HEK293 (cell line): ENCODE measurements at regions of chrX and their contacts with region 1.

Region 1: DNA sequence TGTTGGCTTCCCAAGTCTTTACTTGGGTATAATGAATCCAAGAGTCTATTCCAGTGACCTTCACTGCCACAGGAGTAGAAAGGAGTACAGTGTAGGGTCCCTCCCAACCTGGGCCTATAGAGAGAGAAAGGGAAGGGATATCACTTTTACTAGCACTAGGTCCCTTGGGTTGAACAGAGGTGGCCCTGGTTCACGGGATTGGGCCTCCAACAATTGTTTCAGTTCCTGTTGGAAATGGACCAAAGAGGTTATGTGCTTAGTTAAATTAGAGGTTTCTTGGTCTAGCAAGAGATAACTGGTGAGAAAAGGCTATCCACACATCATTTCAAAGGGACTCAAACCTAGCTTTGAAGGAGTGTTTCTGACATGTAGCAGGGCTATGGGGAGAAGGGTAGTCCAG is 57.1 kb upstream of the MED14 start:
- H3K4me3 ChIP-seq: no peak overlapping the region
- H3K27ac ChIP-seq: no peak overlapping the region
- H3K4me1 ChIP-seq: peaks cover 2% of the 10 kb centered on the region; the same call in 1 of the 2 replicates
- CTCF ChIP-seq: no peak

Region 2: DNA sequence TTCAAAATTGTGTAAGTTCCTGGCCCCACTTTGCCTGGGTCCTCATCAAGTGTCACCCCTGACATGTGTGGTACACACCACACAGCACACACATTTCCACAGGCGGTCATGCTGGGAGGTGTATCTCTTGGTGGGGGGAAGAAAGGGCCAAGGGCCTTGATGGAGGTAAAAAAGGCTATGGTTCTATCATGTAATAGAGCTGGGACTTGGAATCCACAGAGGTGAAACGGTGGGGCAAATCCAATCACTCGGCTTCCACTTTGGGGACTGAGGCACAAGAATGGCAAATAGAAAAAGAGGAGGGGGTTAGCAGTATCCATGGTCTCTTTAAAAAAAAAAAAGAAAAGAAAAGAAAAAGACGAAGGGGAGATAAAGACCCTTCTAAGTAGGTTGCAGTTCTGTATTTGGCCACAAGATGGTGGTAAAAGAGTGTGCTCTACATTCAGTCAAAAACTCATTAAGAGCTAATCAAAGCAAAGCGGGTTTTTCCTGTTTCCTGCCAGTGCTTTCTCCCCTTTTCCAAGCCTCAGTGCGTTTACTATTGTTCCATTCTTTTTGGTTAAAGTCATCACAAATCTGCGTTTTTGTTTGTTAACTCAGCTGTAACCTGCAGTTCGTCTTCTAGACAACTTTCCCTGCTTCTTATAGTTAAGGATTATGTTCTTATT is 248.6 kb before region 1 on chrX:
- CTCF ChIA-PET with region 1: interaction called, 22 read pairs
- POLR2A ChIA-PET with region 1: no interaction called
- H3K4me3 ChIP-seq: no peak overlapping the region
- H3K27ac ChIP-seq: no peak overlapping the region
- H3K4me1 ChIP-seq: peaks cover 2% of the 10 kb centered on the region
- CTCF ChIP-seq: 0 out of 2 replicates have a peak, but pooled peaks have one; percentile 31

Region 3: DNA sequence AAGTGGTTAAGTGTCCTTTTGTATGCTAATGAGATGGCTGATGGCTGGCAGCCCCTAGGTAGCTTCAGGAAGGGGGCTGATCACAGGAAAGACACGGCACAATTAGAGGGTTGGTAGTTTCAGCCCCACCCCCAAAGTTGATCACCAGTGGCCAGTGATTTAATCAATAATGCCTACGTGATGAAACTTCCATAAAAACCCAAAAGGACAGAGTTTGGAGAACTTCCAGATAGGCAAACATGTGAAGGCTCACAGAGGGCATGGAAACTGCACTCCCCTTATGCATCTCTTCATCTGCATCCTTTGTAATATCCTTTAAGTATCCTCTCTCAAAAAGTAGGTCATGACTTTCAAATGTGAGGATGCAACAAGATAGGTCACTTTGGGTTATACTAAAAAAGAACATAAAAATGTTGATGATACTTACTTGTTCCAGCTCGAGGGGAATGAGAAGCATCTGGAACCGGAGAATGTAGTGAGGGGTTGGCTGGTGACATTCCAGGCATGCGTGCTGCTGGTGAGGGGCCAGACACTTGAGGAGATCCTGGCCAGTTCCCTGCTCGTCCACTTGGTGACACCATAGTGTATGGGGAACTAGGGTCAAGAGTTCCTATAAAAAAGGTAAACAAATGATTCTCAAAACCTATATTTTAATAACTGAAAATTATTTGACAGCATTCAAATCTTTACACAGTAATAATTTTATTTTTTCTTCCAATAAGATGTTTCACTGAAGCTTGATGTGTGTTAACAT is 128.4 kb before region 1 on chrX:
- CTCF ChIA-PET with region 1: interaction called, 24 read pairs
- POLR2A ChIA-PET with region 1: no interaction called
- H3K4me3 ChIP-seq: no peak overlapping the region
- H3K27ac ChIP-seq: no peak overlapping the region
- H3K4me1 ChIP-seq: no peaks in the 10 kb centered on the region
- CTCF ChIP-seq: no peak

Region 4: DNA sequence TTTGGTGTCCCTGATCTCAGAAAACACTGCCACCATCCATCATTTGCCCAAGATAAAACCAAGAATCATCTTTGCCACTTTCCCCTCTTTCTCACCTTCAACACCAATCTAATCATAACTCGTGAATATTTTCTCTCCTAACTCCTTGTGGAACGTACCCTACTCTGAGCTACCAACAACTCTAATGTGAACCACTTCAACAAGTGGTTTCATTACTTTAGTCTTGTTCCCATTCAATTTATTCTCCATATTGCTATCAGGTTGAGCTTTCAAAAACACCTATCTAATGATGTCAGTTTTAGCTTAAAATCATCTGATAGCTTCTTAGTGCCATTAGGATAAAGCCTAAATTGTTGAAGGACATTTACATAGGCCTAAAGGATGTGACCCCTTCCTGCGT is 105.3 kb before region 1 on chrX:
- CTCF ChIA-PET with region 1: interaction called, 10 read pairs
- POLR2A ChIA-PET with region 1: no interaction called
- H3K4me3 ChIP-seq: no peak overlapping the region
- H3K27ac ChIP-seq: no peak overlapping the region
- H3K4me1 ChIP-seq: 0 out of 2 replicates have a peak, but pooled peaks cover 3% of the 10 kb centered on the region
- CTCF ChIP-seq: no peak

Region 5: GRCh38 chrX:40735325-40736169 is 56.9 kb before region 1 on chrX and contains the start of gene MED14:
- CTCF ChIA-PET with region 1: interaction called, 14 read pairs
- POLR2A ChIA-PET with region 1: interaction called, 3 read pairs
- H3K4me3 ChIP-seq: peak within 1 kb of the TSS; percentile 98
- H3K27ac ChIP-seq: peak within 1 kb of the TSS; percentile 98
- H3K4me1 ChIP-seq: peaks cover 32% of the 10 kb centered on the region
- CTCF ChIP-seq: peak; percentile 93

Region 6: GRCh38 chrX:40778861-40779575 is 13.4 kb before region 1 on chrX:
- CTCF ChIA-PET with region 1: interaction called, 24 read pairs
- POLR2A ChIA-PET with region 1: no interaction called
- H3K4me3 ChIP-seq: no peak overlapping the region
- H3K27ac ChIP-seq: no peak overlapping the region
- H3K4me1 ChIP-seq: no peaks in the 10 kb centered on the region
- CTCF ChIP-seq: no peak

Region 7: GRCh38 chrX:40809210-40809609 is 16.8 kb after region 1 on chrX:
- CTCF ChIA-PET with region 1: interaction called, 14 read pairs
- POLR2A ChIA-PET with region 1: interaction called, 3 read pairs
- H3K4me3 ChIP-seq: no peak overlapping the region
- H3K27ac ChIP-seq: no peak overlapping the region
- H3K4me1 ChIP-seq: no peaks in the 10 kb centered on the region
- CTCF ChIP-seq: no peak

Region 8: GRCh38 chrX:41308883-41309647 is 516.6 kb after region 1 on chrX:
- CTCF ChIA-PET with region 1: no interaction called
- POLR2A ChIA-PET with region 1: no interaction called
- H3K4me3 ChIP-seq: no peak overlapping the region
- H3K27ac ChIP-seq: no peak overlapping the region
- H3K4me1 ChIP-seq: no peaks in the 10 kb centered on the region
- CTCF ChIP-seq: no peak